Calu3 (cell line): ENCODE measurements at regions of chr5 and their contacts with region 1.

Region 1: DNA sequence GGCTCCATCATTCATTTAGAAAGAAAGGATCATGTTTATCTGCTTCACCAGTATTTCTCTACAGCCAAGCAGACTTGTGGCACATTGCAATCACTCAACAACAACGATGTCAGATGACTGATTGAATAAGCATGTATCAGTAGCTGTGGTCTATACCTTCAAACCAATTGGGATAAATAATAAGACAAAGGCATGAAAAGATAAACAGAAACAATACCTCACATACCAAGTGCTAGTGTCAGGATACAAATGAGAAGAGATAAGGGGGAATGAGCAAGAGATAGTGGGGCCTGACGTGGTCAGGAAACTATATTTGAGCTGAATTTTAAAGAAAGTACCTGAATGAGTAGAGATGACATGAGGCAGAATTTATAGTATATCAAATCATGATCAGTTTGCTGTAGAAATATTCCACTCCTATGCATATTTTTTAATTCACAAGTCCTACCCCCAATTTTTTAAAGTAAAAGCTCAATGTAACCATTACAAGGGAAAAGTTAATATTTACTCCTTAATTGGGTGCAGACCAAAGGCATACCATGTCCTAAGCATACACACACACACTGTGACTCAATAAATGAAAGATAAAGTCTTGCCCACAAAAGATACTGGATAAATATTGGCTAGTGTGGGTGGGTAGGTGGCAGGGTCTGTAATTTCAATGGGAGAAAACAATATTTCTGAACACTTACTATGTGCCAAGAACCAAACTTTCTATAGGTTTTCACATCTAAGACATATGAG is 284.5 kb downstream of the SPOCK1 start:
- DNase-seq: no peak
- H3K4me3 Mint-ChIP-seq: peak overlapping the region; percentile 5
- H3K27ac Mint-ChIP-seq: peak overlapping the region; percentile 30
- H3K4me1 Mint-ChIP-seq: peaks cover 72% of the 10 kb centered on the region
- H3K27me3 Mint-ChIP-seq: peaks cover 29% of the 10 kb centered on the region
- CTCF ChIP-seq: no peak

Region 2: GRCh38 chr5:137142764-137143605 is 71.6 kb before region 1 on chr5:
- CTCF ChIA-PET with region 1: interaction called, 8 read pairs
- intact Hi-C with region 1: loop called (anchors 2 kb)
- DNase-seq: peak; percentile 60
- H3K4me3 Mint-ChIP-seq: no peak overlapping the region
- H3K27ac Mint-ChIP-seq: peak overlapping the region; percentile 53
- H3K4me1 Mint-ChIP-seq: peaks cover 48% of the 10 kb centered on the region
- H3K27me3 Mint-ChIP-seq: no peaks in the 10 kb centered on the region
- CTCF ChIP-seq: no peak

Region 3: DNA sequence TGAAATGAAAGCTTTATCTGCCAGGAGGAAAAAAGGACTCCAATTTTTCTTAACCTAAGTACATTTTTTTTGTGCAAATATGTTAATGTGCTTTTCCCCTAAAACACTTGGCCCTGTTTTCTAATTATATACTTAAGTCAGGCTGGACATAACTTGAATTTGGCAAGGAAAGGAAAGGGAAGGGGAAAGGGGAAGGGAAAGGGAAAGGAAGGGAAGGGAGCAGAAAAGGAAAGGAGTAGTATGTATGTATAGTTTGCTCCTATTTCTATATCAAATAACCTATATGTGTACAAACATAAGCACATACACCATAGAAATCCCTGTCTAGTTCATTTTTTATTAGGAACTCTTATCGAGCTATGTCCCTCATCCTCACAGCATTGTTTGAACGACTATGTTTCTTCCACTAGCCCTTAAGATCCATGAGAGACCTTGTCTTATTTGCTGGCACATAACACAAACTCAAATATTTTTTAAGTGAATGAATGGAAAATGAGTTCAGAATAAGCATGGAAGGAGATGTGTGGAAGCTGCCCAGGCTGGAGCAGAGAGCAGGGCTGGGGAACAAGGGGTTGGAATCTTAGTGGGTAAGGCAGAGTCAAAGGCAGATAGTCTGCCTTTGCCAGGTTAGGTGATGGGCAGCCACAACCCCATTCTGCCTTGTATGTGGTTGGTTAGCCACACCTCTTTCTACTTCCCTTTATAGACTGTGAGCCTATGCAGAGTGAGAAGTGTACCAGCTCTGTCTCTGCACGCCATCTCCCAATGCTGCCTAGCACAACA is 451.3 kb after region 1 on chr5:
- CTCF ChIA-PET with region 1: no interaction called
- intact Hi-C with region 1: no loop called
- DNase-seq: peak; percentile 63
- H3K4me3 Mint-ChIP-seq: peak overlapping the region; percentile 14
- H3K27ac Mint-ChIP-seq: peak overlapping the region; percentile 28
- H3K4me1 Mint-ChIP-seq: peaks cover 68% of the 10 kb centered on the region
- H3K27me3 Mint-ChIP-seq: no peaks in the 10 kb centered on the region
- CTCF ChIP-seq: no peak